ENCODE measurements at regions of chr1 and their contacts with region 1.

Region 1: DNA sequence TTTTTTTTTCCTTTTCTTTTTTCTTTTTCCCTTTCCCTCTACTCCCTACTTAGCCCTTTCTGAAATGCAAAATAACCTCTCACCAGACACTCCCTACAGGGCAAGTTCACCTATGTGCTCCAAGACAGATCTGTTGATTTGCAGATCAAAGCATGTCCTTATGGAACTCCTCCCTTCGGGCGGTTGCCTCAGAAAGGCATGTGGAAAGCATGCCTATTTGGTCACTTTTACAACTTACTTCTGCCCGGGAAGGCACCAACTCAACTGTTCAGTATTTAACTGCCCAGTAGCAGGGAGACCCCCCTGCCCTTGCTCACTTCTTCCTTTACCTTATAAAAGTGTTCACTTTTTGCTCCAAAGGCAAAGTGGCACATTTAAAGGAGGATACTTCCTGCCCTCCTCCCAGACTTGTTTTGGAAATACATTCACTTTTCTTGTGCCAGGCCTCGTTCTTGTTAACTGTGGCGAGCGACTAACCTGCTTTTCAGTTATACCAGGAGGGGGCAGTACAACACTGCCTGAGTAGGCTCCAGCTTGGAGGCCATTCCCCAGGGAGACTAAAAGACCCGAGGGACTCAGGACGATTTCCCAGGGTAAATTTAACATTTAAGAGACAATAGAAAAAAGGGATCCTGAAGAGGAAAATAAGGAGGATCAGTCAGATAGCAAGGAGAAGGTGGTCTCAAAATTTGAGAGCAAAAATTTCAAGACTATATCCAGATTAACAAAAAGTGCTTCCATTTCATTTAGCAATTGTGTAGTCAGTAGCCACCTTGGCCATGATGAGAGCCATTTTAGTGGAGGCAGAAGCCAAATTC is 12.3 kb upstream of the SLAMF7 start:
- DNase-seq: peak; percentile 81
- H3K4me3 Mint-ChIP-seq: no peak overlapping the region
- H3K27ac Mint-ChIP-seq: no peak overlapping the region
- H3K4me1 Mint-ChIP-seq: peaks cover 34% of the 10 kb centered on the region
- H3K27me3 Mint-ChIP-seq: no peaks in the 10 kb centered on the region

Region 2: GRCh38 chr1:160711602-160712311 is 14.9 kb before region 1 on chr1 and contains the start of gene CD48:
- CTCF ChIA-PET with region 1: interaction called, 67 read pairs
- intact Hi-C with region 1: loop called (anchors 1 kb)
- DNase-seq: peak; percentile 70
- H3K4me3 Mint-ChIP-seq: no peak within 1 kb of the TSS
- H3K27ac Mint-ChIP-seq: no peak within 1 kb of the TSS
- H3K4me1 Mint-ChIP-seq: peaks cover 28% of the 10 kb centered on the region
- H3K27me3 Mint-ChIP-seq: no peaks in the 10 kb centered on the region
- total RNA-seq, gene CD48: 338 to 340 TPM

Region 3: DNA sequence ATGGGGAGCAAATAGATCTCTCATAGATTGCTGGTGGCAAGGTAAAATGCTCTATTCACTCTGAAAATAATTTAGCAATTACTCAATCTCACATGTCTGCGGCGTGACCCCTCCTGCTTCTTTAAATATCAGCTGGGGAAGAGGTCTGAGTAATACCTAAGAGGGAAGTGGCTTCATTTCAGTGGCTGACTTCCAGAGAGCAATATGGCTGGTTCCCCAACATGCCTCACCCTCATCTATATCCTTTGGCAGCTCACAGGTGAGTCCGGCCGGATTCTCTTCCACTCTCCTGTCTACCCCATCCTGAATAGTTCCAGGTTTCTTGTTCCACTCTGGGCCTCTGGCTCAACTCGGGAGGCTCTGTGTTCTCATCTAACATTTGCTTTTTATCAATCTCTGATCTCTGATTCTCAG is 12.4 kb after region 1 on chr1 and contains the start of gene SLAMF7:
- CTCF ChIA-PET with region 1: interaction called, 27 read pairs
- intact Hi-C with region 1: loop called (anchors 1 kb)
- DNase-seq: peak; percentile 77
- H3K4me3 Mint-ChIP-seq: peak within 1 kb of the TSS; percentile 88
- H3K27ac Mint-ChIP-seq: peak within 1 kb of the TSS; percentile 94
- H3K4me1 Mint-ChIP-seq: peaks cover 87% of the 10 kb centered on the region
- H3K27me3 Mint-ChIP-seq: no peaks in the 10 kb centered on the region
- total RNA-seq, gene SLAMF7: 79.9 to 82.2 TPM

Region 4: GRCh38 chr1:160748181-160748877 is 21.6 kb after region 1 on chr1:
- CTCF ChIA-PET with region 1: interaction called, 23 read pairs
- intact Hi-C with region 1: loop called (anchors 1 kb)
- DNase-seq: peak; percentile 28
- H3K4me3 Mint-ChIP-seq: no peak overlapping the region
- H3K27ac Mint-ChIP-seq: peak overlapping the region; percentile 81
- H3K4me1 Mint-ChIP-seq: peaks cover 94% of the 10 kb centered on the region
- H3K27me3 Mint-ChIP-seq: no peaks in the 10 kb centered on the region

Region 5: GRCh38 chr1:160830321-160831153 is 103.8 kb after region 1 on chr1:
- CTCF ChIA-PET with region 1: interaction called, 62 read pairs
- intact Hi-C with region 1: loop called (anchors 1 kb)
- DNase-seq: peak; percentile 91
- H3K4me3 Mint-ChIP-seq: no peak overlapping the region
- H3K27ac Mint-ChIP-seq: peak overlapping the region; percentile 32
- H3K4me1 Mint-ChIP-seq: peaks cover 18% of the 10 kb centered on the region
- H3K27me3 Mint-ChIP-seq: no peaks in the 10 kb centered on the region

Region 6: DNA sequence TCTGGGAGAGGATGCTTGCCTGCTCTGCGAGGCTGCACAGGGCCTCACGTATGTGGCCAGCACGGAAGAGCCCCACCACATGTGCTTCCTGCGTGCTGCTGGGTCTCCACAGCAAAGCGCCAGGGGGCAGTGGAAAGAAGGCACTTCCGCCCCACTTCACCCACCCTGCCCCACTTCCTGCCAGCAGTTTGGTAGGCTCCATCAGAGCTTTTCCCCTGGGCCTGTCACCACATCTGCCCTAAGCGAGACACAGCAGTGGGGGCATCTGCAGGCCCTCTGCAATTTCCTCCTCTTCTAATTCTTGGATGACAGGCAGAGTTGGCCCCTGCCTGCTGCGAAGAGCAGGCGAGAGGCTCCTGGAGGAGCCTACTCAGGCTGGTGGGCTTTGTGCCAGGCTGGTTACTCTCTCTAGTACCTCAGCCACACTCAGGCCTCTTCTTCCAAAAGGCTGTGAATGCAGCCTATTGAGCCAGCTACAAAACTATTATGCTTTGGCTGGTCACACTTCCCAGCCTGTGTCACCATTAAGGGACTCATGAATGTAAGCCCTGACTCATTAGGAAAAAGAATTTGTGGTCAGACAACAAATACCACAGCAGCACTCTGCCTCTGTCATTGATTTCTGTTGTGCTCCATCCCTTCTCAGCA is 111.0 kb after region 1 on chr1:
- CTCF ChIA-PET with region 1: interaction called, 62 read pairs
- intact Hi-C with region 1: loop called (anchors 1 kb)
- DNase-seq: peak; percentile 90
- H3K4me3 Mint-ChIP-seq: peak overlapping the region; percentile 16
- H3K27ac Mint-ChIP-seq: peak overlapping the region; percentile 82
- H3K4me1 Mint-ChIP-seq: peaks cover 49% of the 10 kb centered on the region
- H3K27me3 Mint-ChIP-seq: no peaks in the 10 kb centered on the region

Region 7: GRCh38 chr1:160877221-160877620 is 150.5 kb after region 1 on chr1:
- CTCF ChIA-PET with region 1: interaction called, 5 read pairs
- intact Hi-C with region 1: loop called (anchors 1 kb)
- DNase-seq: peak; percentile 14
- H3K4me3 Mint-ChIP-seq: no peak overlapping the region
- H3K27ac Mint-ChIP-seq: no peak overlapping the region
- H3K4me1 Mint-ChIP-seq: peaks cover 16% of the 10 kb centered on the region
- H3K27me3 Mint-ChIP-seq: no peaks in the 10 kb centered on the region